AG04450 (cell line): ENCODE measurements at regions of chr17 and their contacts with region 1.

Region 1: DNA sequence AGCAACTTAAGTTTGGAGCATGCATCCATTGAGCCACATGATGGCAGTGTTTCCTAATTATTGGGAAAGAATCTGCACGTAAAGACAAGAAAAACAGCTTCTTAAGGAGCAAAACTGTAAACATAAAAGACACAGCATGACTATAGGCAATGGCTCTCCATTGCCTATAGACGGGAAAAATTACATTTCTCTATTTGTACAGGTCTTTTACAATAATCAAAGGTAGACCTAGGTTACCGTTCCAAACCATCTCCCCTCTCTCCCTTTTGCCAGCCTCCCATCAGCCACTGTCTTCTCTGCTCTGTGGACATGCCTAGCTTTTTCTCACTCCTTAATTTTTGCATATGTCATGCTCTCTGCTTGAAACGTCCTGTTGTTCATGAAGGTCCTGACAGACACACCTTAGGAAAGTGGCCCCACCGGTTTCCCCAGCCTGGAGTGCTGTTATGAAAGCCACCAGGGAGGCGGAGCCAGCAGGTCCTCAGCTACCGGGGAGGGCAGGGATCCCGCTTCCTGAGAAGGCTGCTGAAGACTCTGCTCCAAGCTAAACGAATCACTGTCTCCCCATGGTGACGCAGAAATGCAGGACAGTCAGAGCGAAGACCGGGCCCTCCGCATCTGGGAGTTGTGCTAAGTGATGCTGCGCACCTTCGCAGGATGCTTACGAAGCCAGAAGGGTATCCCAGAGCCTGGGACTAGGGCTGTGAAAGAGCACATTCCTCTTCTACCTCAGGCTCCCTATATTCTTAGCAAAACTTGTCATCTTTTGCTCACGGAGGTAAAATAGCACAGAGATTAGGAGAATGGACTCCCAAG is 2.2 kb upstream of the SLC16A11 start:
- DNase-seq: peak; percentile 67
- H3K4me3 ChIP-seq: no peak overlapping the region
- H3K27ac ChIP-seq: no peak overlapping the region
- H3K27me3 ChIP-seq: peaks cover 36% of the 10 kb centered on the region
- CTCF ChIP-seq: peak; percentile 80

Region 2: GRCh38 chr17:7001318-7001961 is 44.7 kb before region 1 on chr17:
- CTCF ChIA-PET with region 1: no interaction called
- POLR2A ChIA-PET with region 1: no interaction called
- DNase-seq: no peak
- H3K4me3 ChIP-seq: no peak overlapping the region
- H3K27ac ChIP-seq: no peak overlapping the region
- H3K27me3 ChIP-seq: no peaks in the 10 kb centered on the region
- CTCF ChIP-seq: peak; percentile 62

Region 3: GRCh38 chr17:7021993-7022778 is 23.9 kb before region 1 on chr17:
- CTCF ChIA-PET with region 1: interaction called, 12 read pairs
- POLR2A ChIA-PET with region 1: no interaction called
- DNase-seq: no peak
- H3K4me3 ChIP-seq: peak overlapping the region; percentile 36
- H3K27ac ChIP-seq: no peak overlapping the region
- H3K27me3 ChIP-seq: no peaks in the 10 kb centered on the region
- CTCF ChIP-seq: peak; percentile 87

Region 4: DNA sequence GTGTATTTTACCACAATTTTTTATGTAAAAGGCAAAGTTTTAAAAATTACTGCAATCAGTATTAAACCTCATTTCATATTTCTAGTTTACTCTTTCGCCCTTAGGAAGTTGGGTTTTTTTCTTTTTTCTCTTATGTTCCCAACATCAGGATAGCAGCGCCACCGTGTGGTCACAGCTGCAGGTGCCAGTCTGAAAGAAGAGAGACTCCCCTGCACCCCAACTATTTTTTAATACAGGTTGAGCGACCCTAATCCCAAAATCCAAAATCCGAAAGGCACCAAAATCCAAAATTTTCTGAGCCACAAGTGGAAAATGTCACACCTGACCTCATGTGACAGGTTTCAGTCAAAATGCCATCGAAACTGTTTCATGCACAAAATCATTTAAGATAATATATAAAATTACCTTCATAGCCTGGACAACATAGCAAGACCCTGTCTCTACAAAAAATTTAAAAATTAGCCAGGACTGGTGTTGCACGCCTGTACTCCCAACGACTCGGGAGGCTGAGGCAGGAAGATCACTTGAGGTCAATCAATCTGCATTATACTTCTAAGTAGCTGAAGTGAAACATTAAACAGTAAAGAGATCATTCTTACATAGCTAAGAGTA is 90.3 kb after region 1 on chr17:
- CTCF ChIA-PET with region 1: interaction called, 250 read pairs
- POLR2A ChIA-PET with region 1: interaction called, 3 read pairs
- DNase-seq: peak; percentile 34
- H3K4me3 ChIP-seq: no peak overlapping the region
- H3K27ac ChIP-seq: no peak overlapping the region
- H3K27me3 ChIP-seq: peaks cover 53% of the 10 kb centered on the region
- CTCF ChIP-seq: peak; percentile 96

Region 5: GRCh38 chr17:7214300-7215135 is 168.4 kb after region 1 on chr17:
- CTCF ChIA-PET with region 1: interaction called, 20 read pairs
- POLR2A ChIA-PET with region 1: interaction called, 8 read pairs
- DNase-seq: peak; percentile 89
- H3K4me3 ChIP-seq: peak overlapping the region; percentile 58
- H3K27ac ChIP-seq: peak overlapping the region; percentile 77
- H3K27me3 ChIP-seq: no peaks in the 10 kb centered on the region
- CTCF ChIP-seq: peak; percentile 63

Region 6: DNA sequence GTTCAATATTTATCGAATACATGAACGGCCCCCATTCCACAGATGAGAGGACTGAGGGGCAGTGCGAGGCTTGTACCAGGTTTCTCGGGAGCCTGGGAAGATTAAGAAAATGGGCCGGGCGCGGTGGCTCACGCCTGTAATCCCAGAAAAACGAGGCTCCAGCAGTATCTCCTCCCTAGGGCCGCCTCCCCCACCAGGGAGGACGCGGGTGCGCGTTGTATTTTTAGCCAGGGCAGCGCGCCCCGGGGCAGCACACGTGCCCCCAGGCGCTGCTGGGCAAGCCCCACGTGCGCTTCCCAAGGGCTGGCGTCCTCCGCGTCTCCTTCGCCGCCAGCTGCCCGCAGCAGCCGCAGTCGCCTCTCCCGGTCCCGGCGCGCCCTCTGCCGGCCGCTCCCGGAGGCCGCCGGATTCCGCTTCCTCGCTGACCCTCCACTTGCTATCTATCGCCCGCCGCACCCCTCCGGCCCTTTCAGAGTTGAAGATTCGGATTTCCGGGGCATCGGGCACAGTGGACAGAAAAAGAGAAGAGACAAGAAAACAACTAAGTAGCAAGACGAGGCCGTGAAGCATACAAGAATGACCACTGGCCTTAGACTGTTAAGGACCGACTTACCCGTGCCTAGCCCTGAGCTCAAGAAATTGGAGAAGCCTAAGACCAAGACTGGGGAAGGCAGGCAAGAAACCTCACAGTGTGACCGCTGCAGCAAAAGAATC is 250.2 kb after region 1 on chr17:
- CTCF ChIA-PET with region 1: interaction called, 32 read pairs
- POLR2A ChIA-PET with region 1: interaction called, 4 read pairs
- DNase-seq: no peak
- H3K4me3 ChIP-seq: peak overlapping the region; percentile 27; the same call in 1 of the 2 replicates
- H3K27ac ChIP-seq: no peak overlapping the region
- H3K27me3 ChIP-seq: peaks cover 29% of the 10 kb centered on the region
- CTCF ChIP-seq: peak; percentile 85